Endothelial cell of umbilical vein (primary cell): ENCODE measurements at regions of chr14 and their contacts with region 1.

Region 1: DNA sequence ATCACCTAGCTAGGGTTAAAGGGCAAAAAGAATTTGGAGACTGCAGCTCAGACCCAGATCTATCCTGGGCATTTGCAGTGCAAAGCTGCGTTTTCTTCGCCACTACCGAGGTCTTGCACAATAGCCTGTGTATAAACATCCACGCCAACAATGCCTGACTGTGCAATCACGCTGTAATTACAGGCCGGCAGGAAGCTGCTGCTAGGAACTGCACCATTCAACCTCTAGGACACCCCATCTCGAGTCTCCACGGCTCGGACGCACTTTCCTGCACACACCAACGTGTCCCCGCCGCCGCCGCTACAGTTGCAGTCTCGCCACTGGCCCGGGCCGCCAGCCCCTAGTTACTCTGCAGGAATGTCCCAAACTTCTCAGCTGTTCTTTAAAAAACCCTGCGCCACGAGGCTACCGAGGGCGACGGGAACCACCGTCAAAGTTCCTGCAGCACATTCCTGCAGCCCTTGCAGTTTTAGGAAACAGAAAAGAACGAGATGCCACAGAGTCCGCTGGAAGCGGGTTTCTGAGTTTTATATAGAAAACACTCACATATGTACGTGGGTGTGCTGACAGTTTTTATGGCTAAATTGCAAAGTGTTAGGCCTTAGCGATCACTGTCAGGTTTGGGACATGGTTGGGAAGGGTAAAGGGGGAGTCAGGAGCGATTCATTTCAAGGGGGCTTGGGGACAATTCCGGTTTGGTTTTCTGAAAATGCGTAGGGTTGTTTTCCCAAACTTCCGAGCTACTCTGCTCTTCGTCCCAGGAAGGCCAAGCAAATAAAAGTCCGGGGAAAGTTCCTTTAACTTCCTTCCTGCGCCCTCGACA is 65.5 kb upstream of the PTGR2 start:
- DNase-seq: peak; percentile 84
- H3K4me3 ChIP-seq: peak overlapping the region; percentile 33 to 79 (median 47)
- H3K27ac ChIP-seq: peak overlapping the region; percentile 93
- H3K4me1 ChIP-seq: peaks cover 52% of the 10 kb centered on the region
- H3K27me3 ChIP-seq: no peaks in the 10 kb centered on the region
- CTCF ChIP-seq: peak in 1 of 2 donors; percentile 35
- POLR2A ChIP-seq: no peak

Region 2: DNA sequence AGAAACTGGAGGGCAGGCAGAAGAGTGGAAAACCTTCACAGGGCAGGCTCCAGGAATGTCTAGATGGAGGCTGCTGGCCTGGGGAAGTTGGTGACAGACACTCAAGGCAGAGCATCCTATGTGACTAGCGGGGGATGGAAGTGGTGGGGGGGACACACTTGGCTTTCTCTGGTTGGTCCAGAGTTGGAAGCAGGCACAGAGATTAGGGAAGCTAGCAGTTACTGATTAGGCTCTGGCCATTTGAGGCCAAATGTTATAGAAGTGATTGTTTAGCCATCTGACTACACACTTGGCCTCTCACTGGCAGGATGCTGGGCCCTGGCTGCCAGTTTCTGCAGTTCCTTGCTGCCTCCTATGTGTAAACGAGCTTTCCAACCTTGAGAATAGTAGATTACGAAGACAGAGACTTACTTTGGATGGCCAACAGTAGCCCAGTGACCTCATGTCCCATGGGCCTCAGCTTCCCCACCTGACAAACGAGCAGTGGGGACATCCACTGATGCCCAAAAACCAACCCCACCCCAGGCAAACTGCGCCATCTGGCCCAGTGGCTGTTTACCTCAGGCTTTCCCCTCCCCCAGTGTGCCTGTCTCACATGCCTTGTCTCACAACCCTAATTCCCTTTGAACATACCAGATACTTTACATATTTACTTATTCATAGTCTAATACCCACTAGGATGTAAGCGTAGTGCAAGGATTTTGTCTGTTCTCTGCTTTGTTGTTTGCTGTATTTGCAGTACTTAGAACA is 446.1 kb before region 1 on chr14:
- CTCF ChIA-PET with region 1: no interaction called
- POLR2A ChIA-PET with region 1: no interaction called
- dilution Hi-C with region 1: no loop called
- intact Hi-C with region 1: no loop called
- DNase-seq: no peak
- H3K4me3 ChIP-seq: no peak overlapping the region
- H3K27ac ChIP-seq: no peak overlapping the region
- H3K4me1 ChIP-seq: no peaks in the 10 kb centered on the region
- H3K27me3 ChIP-seq: no peaks in the 10 kb centered on the region
- CTCF ChIP-seq: no peak
- POLR2A ChIP-seq: no peak

Region 3: GRCh38 chr14:73625706-73626105 is 160.4 kb before region 1 on chr14:
- CTCF ChIA-PET with region 1: no interaction called
- POLR2A ChIA-PET with region 1: no interaction called
- dilution Hi-C with region 1: no loop called
- intact Hi-C with region 1: no loop called
- DNase-seq: peak; percentile 20
- H3K4me3 ChIP-seq: no peak overlapping the region
- H3K27ac ChIP-seq: no peak overlapping the region
- H3K4me1 ChIP-seq: no peaks in the 10 kb centered on the region
- H3K27me3 ChIP-seq: no peaks in the 10 kb centered on the region
- CTCF ChIP-seq: no peak
- POLR2A ChIP-seq: no peak

Region 4: GRCh38 chr14:73753959-73754882 is 31.9 kb before region 1 on chr14:
- CTCF ChIA-PET with region 1: interaction called, 30 read pairs
- POLR2A ChIA-PET with region 1: interaction called, 5 read pairs
- dilution Hi-C with region 1: no loop called
- intact Hi-C with region 1: loop called (anchors 1 kb)
- DNase-seq: peak; percentile 57
- H3K4me3 ChIP-seq: peak overlapping the region in 1 of 3 experiments; percentile 39
- H3K27ac ChIP-seq: peak overlapping the region; percentile 96
- H3K4me1 ChIP-seq: peaks cover 81% of the 10 kb centered on the region
- H3K27me3 ChIP-seq: no peaks in the 10 kb centered on the region
- CTCF ChIP-seq: no peak
- POLR2A ChIP-seq: no peak

Region 5: GRCh38 chr14:73759714-73760597 is 26.1 kb before region 1 on chr14:
- CTCF ChIA-PET with region 1: interaction called, 30 read pairs
- POLR2A ChIA-PET with region 1: interaction called, 8 read pairs
- dilution Hi-C with region 1: no loop called
- intact Hi-C with region 1: loop called (anchors 1 kb)
- DNase-seq: peak; percentile 97
- H3K4me3 ChIP-seq: peak overlapping the region; percentile 53 to 60 (median 54)
- H3K27ac ChIP-seq: peak overlapping the region; percentile 96
- H3K4me1 ChIP-seq: peaks cover 53% of the 10 kb centered on the region
- H3K27me3 ChIP-seq: no peaks in the 10 kb centered on the region
- CTCF ChIP-seq: peak in 1 of 2 donors; percentile 11
- POLR2A ChIP-seq: peak; percentile 98

Region 6: DNA sequence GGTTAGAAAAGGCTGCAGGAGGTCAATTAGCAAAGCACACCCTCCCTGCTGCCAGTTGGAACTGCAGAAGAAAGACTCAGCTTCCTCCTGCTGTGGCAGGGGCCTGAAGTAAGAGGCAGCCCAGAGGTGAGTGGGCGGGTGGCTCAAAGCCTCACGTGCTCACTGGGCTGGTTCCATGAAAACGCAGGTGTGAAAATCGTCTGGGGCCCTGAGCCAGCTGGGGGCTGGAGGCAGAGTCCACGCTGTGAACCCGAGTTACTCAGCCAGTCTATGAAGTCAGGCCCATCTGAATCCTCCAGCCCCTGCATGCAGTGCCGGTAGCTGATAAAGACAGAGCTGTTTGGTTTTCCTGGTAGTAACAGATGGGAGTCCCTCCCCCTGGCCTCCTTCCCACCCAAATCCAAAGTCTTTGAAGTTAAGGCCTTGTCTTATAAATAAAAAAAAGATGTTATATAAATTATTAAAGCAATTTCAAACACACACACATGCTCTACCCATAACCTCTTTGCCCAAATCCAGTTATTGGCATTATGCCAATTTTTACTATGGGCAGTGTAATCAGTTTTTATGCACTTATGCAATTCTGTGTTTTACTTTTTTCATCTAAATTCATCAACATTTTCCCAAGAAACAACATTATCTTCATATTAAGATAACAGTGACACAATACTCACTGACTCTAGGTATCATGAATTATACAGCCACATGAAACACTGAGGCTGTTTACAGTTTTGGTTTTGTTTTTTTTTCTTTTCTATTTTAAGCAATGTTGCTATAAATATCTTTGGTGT is 14.0 kb before region 1 on chr14:
- CTCF ChIA-PET with region 1: interaction called, 8 read pairs
- POLR2A ChIA-PET with region 1: interaction called, 3 read pairs
- dilution Hi-C with region 1: no loop called
- intact Hi-C with region 1: loop called (anchors 1 kb)
- DNase-seq: peak; percentile 80
- H3K4me3 ChIP-seq: no peak overlapping the region
- H3K27ac ChIP-seq: peak overlapping the region; percentile 31
- H3K4me1 ChIP-seq: peaks cover 14% of the 10 kb centered on the region
- H3K27me3 ChIP-seq: no peaks in the 10 kb centered on the region
- CTCF ChIP-seq: no peak
- POLR2A ChIP-seq: no peak

Region 7: DNA sequence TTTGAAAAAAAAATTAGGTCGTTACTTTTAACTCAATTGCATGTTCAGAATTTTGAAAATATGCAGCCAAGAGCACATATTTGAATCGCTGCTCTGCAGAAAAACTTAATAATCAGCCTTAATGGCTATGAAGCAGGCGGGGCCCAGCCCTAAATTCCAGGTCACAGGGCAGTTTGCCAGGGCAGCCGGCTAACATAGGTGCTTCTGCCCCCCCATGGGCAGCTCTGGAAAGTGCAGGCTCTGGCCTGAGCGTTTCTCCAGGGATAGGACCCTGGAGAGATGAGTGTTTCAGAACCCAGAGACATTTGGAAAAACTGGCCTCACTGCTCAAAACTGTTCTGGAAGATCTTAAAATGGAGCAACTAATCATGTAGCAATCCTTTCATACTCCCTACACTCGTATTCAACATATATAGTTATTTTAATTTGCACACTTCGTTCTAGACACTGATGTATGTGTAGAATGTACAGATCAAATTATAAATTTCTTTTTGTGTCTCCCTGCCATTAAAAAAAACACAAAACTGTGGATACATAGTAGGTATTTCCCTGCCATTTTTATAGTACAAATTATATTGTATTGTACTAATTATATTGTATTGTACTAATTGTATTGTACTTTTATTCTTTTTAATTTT is 39.6 kb after region 1 on chr14:
- CTCF ChIA-PET with region 1: interaction called, 6 read pairs
- POLR2A ChIA-PET with region 1: no interaction called
- dilution Hi-C with region 1: no loop called
- intact Hi-C with region 1: loop called (anchors 1 kb)
- DNase-seq: peak; percentile 71
- H3K4me3 ChIP-seq: no peak overlapping the region
- H3K27ac ChIP-seq: no peak overlapping the region
- H3K4me1 ChIP-seq: peaks cover 7% of the 10 kb centered on the region
- H3K27me3 ChIP-seq: no peaks in the 10 kb centered on the region
- CTCF ChIP-seq: peak; percentile 89
- POLR2A ChIP-seq: no peak

Region 8: DNA sequence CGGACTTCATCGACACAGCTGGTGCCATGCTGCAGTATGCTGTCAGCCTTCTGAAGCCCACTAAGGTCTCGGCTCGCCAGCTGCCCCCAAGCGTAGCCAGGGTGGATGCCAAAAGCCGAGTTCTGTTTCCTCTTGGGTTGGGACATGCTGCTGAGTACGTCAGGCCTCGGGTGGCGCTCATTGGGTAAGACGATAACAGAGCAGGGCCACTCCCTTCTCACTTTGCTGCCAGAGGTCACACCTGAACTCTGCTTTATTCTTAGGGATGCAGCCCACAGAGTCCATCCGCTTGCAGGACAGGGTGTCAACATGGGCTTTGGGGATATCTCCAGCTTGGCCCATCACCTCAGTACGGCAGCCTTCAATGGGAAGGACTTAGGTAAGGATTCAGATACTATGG is 175.1 kb after region 1 on chr14:
- CTCF ChIA-PET with region 1: no interaction called
- POLR2A ChIA-PET with region 1: no interaction called
- dilution Hi-C with region 1: no loop called
- intact Hi-C with region 1: no loop called
- DNase-seq: no peak
- H3K4me3 ChIP-seq: no peak overlapping the region
- H3K27ac ChIP-seq: no peak overlapping the region
- H3K4me1 ChIP-seq: no peaks in the 10 kb centered on the region
- H3K27me3 ChIP-seq: no peaks in the 10 kb centered on the region
- CTCF ChIP-seq: no peak
- POLR2A ChIP-seq: no peak

Region 9: GRCh38 chr14:73977600-73978295 is 191.7 kb after region 1 on chr14:
- CTCF ChIA-PET with region 1: no interaction called
- POLR2A ChIA-PET with region 1: no interaction called
- dilution Hi-C with region 1: no loop called
- intact Hi-C with region 1: no loop called
- DNase-seq: no peak
- H3K4me3 ChIP-seq: no peak overlapping the region
- H3K27ac ChIP-seq: no peak overlapping the region
- H3K4me1 ChIP-seq: no peaks in the 10 kb centered on the region
- H3K27me3 ChIP-seq: no peaks in the 10 kb centered on the region
- CTCF ChIP-seq: no peak
- POLR2A ChIP-seq: no peak